ENCODE measurements at regions of chr5 and their contacts with region 1.

Region 1: DNA sequence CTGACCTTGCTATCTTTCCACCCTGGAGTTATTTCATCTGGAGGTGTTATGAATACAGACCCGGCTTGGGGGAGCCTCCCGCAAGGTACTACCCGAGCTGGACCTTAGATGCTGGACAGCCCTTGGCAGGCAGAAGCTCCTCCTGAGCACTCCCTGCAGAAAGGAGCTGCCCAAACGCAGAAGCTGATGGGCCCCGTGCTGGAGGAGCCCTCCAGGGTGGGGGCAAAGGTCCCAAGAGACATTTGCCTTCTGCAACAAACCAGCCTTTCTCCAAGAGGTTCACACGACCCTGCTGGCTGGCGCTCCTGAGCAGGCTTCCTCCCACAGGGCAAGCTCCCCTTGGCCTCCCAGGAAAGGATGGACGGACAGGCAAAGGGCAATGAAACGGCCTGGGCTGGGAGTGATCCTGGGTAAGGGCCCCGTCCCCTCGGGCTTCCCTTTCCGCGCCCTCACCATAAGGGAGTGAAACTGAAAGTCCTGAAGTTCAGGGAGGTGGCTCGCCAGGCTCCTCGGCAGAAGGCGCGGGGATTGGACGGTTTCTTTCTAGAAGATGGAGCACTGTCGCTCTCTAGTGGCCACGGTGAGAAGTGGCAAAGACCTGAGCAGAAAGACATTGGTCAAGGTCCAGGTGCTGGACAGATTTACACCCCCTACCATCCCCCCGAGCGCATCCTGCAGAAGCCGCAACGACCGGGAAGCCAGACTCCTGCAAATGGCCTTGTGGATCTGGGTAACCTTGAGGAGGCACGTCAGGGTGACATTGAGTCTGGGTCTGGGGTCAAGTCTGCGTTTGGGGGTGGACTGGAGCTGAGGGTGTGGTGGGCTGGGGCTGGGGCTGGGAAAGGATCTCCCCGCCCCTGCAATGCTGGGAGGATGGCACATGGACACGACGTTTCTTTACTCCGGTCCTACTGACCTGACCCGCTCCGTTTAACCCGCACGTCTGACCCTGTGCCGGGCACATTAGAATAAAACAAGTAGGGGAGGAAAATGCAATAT is 56.4 kb downstream of the NEURL1B start:
- DNase-seq: peak; percentile 87
- H3K4me3 ChIP-seq: peak overlapping the region; percentile 48 to 68
- H3K27ac ChIP-seq: no peak overlapping the region
- H3K4me1 ChIP-seq: peaks cover 0 to 20% of the 10 kb centered on the region in 2 experiments; a peak in 2 of 4 replicates
- H3K27me3 ChIP-seq: no peaks in the 10 kb centered on the region; the same call in 1 of the 2 replicates
- CTCF ChIP-seq: peak; percentile 89
- EP300 ChIP-seq: no peak
- RAD21 ChIP-seq: peak; percentile 96

Region 2: DNA sequence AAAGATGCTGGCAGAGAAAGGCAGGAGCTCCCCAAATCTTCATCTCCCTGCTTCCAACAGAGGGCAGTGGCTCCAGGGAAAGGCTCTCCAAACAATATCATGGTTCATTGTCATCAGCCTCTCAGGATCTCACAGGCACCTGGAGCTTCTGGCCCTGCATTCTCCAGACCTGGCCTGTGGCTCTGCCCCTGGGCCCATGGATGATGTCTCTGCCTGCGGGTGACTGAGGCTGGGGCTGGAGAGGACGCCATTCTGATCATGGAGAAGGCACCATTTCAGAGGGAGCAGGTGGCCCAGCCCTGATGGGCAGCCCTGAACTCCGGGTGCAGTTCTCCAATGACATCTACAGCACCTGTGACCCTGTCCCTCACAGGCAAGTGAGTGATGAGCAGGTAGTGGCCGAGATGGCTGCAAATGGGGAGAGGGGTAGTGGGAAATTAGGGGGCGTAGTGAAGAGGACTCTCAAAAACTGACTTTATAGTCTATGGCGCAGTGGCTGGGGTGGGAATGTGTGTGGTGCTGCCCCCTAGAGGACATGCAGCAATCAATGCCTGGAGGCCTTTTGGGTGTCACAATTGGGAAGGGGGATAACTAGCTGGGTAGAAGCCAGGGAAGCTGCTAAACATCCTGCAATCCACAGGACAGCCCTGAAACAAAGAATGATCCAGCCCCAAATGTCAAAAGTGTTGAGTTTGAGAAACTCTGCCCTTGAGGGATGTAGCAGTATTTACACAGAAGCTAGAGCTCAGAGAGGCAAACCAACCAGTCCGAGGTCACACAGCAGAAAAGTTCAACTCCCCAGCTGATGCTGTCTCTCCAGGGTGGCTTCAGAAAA is 246.3 kb before region 1 on chr5:
- CTCF ChIA-PET with region 1: interaction called, 14 read pairs
- POLR2A ChIA-PET with region 1: no interaction called
- DNase-seq: peak; percentile 64
- H3K4me3 ChIP-seq: no peak overlapping the region; a peak in 1 of 4 replicates
- H3K27ac ChIP-seq: peak overlapping the region in 1 of 2 experiments; percentile 92; a peak in 2 of 4 replicates
- H3K4me1 ChIP-seq: peaks cover 16 to 36% of the 10 kb centered on the region in 2 experiments; a peak in 2 of 4 replicates
- H3K27me3 ChIP-seq: no peaks in the 10 kb centered on the region
- CTCF ChIP-seq: peak; percentile 82
- EP300 ChIP-seq: no peak
- RAD21 ChIP-seq: peak; percentile 46

Region 3: GRCh38 chr5:172473427-172473826 is 224.0 kb before region 1 on chr5:
- CTCF ChIA-PET with region 1: interaction called, 209 read pairs
- POLR2A ChIA-PET with region 1: no interaction called
- DNase-seq: no peak
- H3K4me3 ChIP-seq: no peak overlapping the region
- H3K27ac ChIP-seq: no peak overlapping the region
- H3K4me1 ChIP-seq: peaks cover 0 to 3% of the 10 kb centered on the region in 2 experiments; a peak in 1 of 4 replicates
- H3K27me3 ChIP-seq: no peaks in the 10 kb centered on the region
- CTCF ChIP-seq: no peak
- EP300 ChIP-seq: no peak
- RAD21 ChIP-seq: no peak

Region 4: GRCh38 chr5:172548311-172548731 is 149.1 kb before region 1 on chr5:
- CTCF ChIA-PET with region 1: interaction called, 10 read pairs
- POLR2A ChIA-PET with region 1: no interaction called
- DNase-seq: no peak
- H3K4me3 ChIP-seq: no peak overlapping the region
- H3K27ac ChIP-seq: no peak overlapping the region
- H3K4me1 ChIP-seq: peaks cover 0 to 24% of the 10 kb centered on the region in 2 experiments; a peak in 1 of 4 replicates
- H3K27me3 ChIP-seq: no peaks in the 10 kb centered on the region; the same call in 1 of the 2 replicates
- CTCF ChIP-seq: no peak
- EP300 ChIP-seq: no peak
- RAD21 ChIP-seq: no peak

Region 5: DNA sequence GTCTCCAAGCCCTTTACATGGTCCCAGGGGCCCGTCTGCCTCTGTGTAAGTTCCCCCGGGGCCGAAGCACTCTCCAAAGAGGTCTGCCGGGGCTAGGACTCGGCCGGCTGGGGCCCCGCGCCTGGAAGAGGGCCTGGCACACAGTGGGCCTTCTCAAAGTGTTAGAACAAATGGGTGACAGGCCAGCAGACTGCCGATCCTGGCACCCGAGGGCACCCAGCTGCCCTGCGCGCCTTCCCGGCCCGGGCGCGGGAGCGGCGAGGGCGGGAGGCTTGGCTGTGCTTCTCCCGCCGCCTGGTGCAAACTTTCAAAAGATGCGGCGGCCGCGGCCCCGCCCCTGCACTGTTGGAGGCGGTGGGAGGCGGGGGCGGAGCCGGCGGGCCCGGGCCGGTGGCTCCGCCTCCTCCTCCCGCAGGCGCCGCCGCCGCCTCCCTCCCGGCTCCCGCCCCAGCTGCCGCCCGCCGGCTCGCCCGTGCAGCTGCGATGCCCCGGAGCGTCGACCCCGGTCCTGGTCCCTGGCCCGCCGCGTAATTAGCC is 56.5 kb before region 1 on chr5 and contains the start of gene NEURL1B:
- CTCF ChIA-PET with region 1: interaction called, 71 read pairs
- POLR2A ChIA-PET with region 1: no interaction called
- DNase-seq: peak; percentile 98
- H3K4me3 ChIP-seq: peak within 1 kb of the TSS; percentile 89 to 91
- H3K27ac ChIP-seq: peak within 1 kb of the TSS; percentile 31 to 43; a peak in 2 of 4 replicates
- H3K4me1 ChIP-seq: peaks cover 5 to 33% of the 10 kb centered on the region in 2 experiments; a peak in 2 of 4 replicates
- H3K27me3 ChIP-seq: no peaks in the 10 kb centered on the region
- CTCF ChIP-seq: no peak
- EP300 ChIP-seq: no peak
- RAD21 ChIP-seq: no peak; the same call in 1 of the 2 replicates
- polyA plus RNA-seq, gene NEURL1B: 2.2 and 2.8 TPM in 2 replicates

Region 6: DNA sequence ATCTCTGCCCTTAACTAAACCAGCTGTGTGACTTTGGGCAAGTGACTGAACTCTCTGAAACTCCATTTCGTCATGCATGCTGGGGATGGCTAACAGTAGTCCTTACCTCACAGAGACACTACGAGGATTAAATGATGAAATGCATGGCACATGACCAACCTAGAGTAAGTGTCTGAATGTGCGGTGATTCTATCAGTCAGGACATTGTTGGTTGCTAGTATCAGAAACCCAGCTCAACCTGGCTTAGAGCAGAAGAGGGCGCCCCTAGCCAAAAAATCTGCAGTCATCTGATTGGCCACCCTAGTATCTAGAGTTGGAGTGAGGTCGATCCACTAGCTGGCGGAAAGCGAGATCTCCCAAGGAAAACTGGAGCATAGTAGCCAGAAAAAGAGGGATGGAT is 31.2 kb before region 1 on chr5:
- CTCF ChIA-PET with region 1: interaction called, 51 read pairs
- POLR2A ChIA-PET with region 1: no interaction called
- DNase-seq: no peak
- H3K4me3 ChIP-seq: no peak overlapping the region
- H3K27ac ChIP-seq: peak overlapping the region in 1 of 2 experiments; percentile 93; a peak in 1 of 4 replicates
- H3K4me1 ChIP-seq: peaks cover 0 to 27% of the 10 kb centered on the region in 2 experiments; a peak in 3 of 4 replicates
- H3K27me3 ChIP-seq: no peaks in the 10 kb centered on the region
- CTCF ChIP-seq: no peak
- EP300 ChIP-seq: no peak
- RAD21 ChIP-seq: peak; percentile 49

Region 7: GRCh38 chr5:172678902-172679301 is 18.5 kb before region 1 on chr5:
- CTCF ChIA-PET with region 1: interaction called, 44 read pairs
- POLR2A ChIA-PET with region 1: no interaction called
- DNase-seq: peak; percentile 54
- H3K4me3 ChIP-seq: no peak overlapping the region
- H3K27ac ChIP-seq: no peak overlapping the region
- H3K4me1 ChIP-seq: peaks cover 0 to 5% of the 10 kb centered on the region in 2 experiments; a peak in 1 of 4 replicates
- H3K27me3 ChIP-seq: no peaks in the 10 kb centered on the region
- CTCF ChIP-seq: no peak
- EP300 ChIP-seq: no peak
- RAD21 ChIP-seq: no peak